IMR-90 (cell line): ENCODE measurements at regions of chr18 and their contacts with region 1.

Region 1: GRCh38 chr18:34661464-34662111 is 48.5 kb upstream of the DTNA start:
- DNase-seq: peak; percentile 51
- ATAC-seq: peak; percentile 83
- H3K4me3 ChIP-seq: no peak overlapping the region
- H3K27ac ChIP-seq: no peak overlapping the region
- H3K4me1 ChIP-seq: peaks cover 2% of the 10 kb centered on the region
- H3K27me3 ChIP-seq: no peaks in the 10 kb centered on the region
- CTCF ChIP-seq: peak; percentile 81
- POLR2A ChIP-seq: no peak
- RAD21 ChIP-seq: peak; percentile 81

Region 2: GRCh38 chr18:34592961-34593382 is 68.6 kb before region 1 on chr18:
- CTCF ChIA-PET with region 1: interaction called, 3 read pairs
- POLR2A ChIA-PET with region 1: no interaction called
- dilution Hi-C with region 1: no loop called
- in situ Hi-C with region 1: no loop called
- intact Hi-C with region 1: loop called (anchors 1 kb)
- DNase-seq: peak; percentile 59
- ATAC-seq: peak; percentile 98
- H3K4me3 ChIP-seq: peak overlapping the region; percentile 40
- H3K27ac ChIP-seq: peak overlapping the region; percentile 12; the same call in 1 of the 2 replicates
- H3K4me1 ChIP-seq: peaks cover 4% of the 10 kb centered on the region
- H3K27me3 ChIP-seq: peaks cover 3% of the 10 kb centered on the region
- CTCF ChIP-seq: no peak
- POLR2A ChIP-seq: no peak
- RAD21 ChIP-seq: no peak

Region 3: DNA sequence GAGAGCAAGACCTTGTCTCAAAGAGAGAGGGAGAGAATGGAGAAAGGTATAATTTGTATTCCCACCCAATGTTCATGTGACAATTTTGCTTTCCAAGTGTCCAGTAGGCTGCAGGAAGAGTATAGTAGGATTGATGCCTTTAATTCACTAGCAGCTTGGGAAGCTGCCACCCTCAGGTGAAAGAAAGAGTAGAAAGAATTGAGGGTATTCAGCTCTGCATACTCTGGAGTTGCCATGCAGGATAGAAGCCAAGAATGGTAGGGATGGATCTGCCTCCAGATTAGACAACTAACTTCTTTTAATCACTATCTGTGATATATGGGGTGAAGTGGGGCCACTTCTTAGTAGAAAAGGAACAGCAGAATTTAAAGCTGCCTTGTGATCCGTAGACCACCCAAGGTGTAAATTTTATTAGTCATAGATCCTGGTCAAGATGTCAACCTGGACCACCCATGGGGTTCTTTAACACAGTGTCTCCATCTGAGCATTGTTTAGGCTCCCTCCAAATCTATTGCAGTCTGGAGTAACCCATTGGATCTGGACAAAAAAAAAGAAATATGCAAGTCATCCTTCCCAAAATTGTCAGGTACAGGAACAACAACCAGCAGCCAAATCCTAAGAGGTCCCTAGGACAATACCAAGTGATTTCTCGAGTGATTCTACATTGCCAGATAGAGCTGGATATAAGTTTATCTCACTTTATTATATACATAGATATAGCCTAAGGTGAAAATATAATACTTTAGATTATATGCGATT is 15.4 kb after region 1 on chr18:
- CTCF ChIA-PET with region 1: interaction called, 14 read pairs
- POLR2A ChIA-PET with region 1: no interaction called
- dilution Hi-C with region 1: no loop called
- in situ Hi-C with region 1: no loop called
- intact Hi-C with region 1: no loop called
- DNase-seq: no peak
- ATAC-seq: no peak
- H3K4me3 ChIP-seq: no peak overlapping the region
- H3K27ac ChIP-seq: no peak overlapping the region
- H3K4me1 ChIP-seq: no peaks in the 10 kb centered on the region
- H3K27me3 ChIP-seq: peaks cover 3% of the 10 kb centered on the region
- CTCF ChIP-seq: no peak
- POLR2A ChIP-seq: no peak
- RAD21 ChIP-seq: no peak

Region 4: GRCh38 chr18:34707670-34708069 is 46.1 kb after region 1 on chr18:
- CTCF ChIA-PET with region 1: interaction called, 17 read pairs
- POLR2A ChIA-PET with region 1: no interaction called
- dilution Hi-C with region 1: no loop called
- in situ Hi-C with region 1: loop called (anchors 5 kb)
- intact Hi-C with region 1: loop called (anchors 2 kb)
- DNase-seq: peak; percentile 92
- ATAC-seq: peak; percentile 22; the same call in 1 of the 2 replicates
- H3K4me3 ChIP-seq: no peak overlapping the region
- H3K27ac ChIP-seq: peak overlapping the region; percentile 49; the same call in 1 of the 2 replicates
- H3K4me1 ChIP-seq: peaks cover 7% of the 10 kb centered on the region
- H3K27me3 ChIP-seq: no peaks in the 10 kb centered on the region
- CTCF ChIP-seq: no peak
- POLR2A ChIP-seq: no peak
- RAD21 ChIP-seq: no peak

Region 5: DNA sequence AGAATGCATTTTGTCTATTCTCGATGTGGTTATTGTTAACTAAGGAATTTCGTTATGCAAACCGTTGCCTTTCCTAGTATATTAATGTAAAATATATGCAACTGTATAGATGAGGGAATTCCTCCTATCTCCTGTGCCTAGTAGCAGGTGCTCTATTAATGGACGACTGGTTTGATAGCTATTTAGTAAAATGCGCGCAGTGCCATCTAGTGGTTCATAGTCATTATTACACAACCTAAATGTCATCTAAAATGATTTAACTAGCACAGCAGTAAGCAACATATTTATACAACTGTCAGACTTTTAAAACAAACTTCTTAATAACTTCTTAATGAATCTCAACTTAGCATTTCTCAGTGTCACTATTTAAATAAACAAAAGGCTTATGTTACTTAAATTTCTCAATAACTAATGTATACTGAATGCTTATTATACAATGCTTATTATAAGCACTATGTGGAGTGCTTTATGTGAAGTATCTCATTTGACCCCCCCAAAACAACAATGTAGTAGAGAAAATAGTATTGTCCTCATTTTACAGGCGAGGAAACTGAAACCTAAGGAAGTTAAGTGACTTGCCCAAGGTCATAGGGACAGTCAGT is 126.4 kb after region 1 on chr18:
- CTCF ChIA-PET with region 1: interaction called, 14 read pairs
- POLR2A ChIA-PET with region 1: no interaction called
- dilution Hi-C with region 1: no loop called
- in situ Hi-C with region 1: no loop called
- intact Hi-C with region 1: loop called (anchors 1 kb)
- DNase-seq: peak; percentile 69
- ATAC-seq: peak; percentile 64; the same call in 1 of the 2 replicates
- H3K4me3 ChIP-seq: no peak overlapping the region
- H3K27ac ChIP-seq: no peak overlapping the region
- H3K4me1 ChIP-seq: peaks cover 7% of the 10 kb centered on the region; the same call in 1 of the 2 replicates
- H3K27me3 ChIP-seq: no peaks in the 10 kb centered on the region
- CTCF ChIP-seq: peak; percentile 74
- POLR2A ChIP-seq: no peak
- RAD21 ChIP-seq: peak; percentile 90